ENCODE measurements at regions of chr13 and their contacts with region 1.

Region 1: GRCh38 chr13:41222259-41222852 is 28.0 kb upstream of the KBTBD7 start:
- DNase-seq: peak; percentile 25
- H3K4me3 Mint-ChIP-seq: no peak overlapping the region
- H3K27ac Mint-ChIP-seq: no peak overlapping the region
- H3K4me1 Mint-ChIP-seq: peaks cover 5% of the 10 kb centered on the region
- H3K27me3 Mint-ChIP-seq: no peaks in the 10 kb centered on the region

Region 2: GRCh38 chr13:40922437-40923040 is 299.8 kb before region 1 on chr13:
- intact Hi-C with region 1: no loop called
- DNase-seq: no peak
- H3K4me3 Mint-ChIP-seq: peak overlapping the region; percentile 70
- H3K27ac Mint-ChIP-seq: peak overlapping the region; percentile 68
- H3K4me1 Mint-ChIP-seq: peaks cover 9% of the 10 kb centered on the region
- H3K27me3 Mint-ChIP-seq: no peaks in the 10 kb centered on the region

Region 3: GRCh38 chr13:40943073-40943472 is 279.3 kb before region 1 on chr13:
- intact Hi-C with region 1: no loop called
- DNase-seq: no peak
- H3K4me3 Mint-ChIP-seq: no peak overlapping the region
- H3K27ac Mint-ChIP-seq: no peak overlapping the region
- H3K4me1 Mint-ChIP-seq: peaks cover 8% of the 10 kb centered on the region
- H3K27me3 Mint-ChIP-seq: no peaks in the 10 kb centered on the region

Region 4: GRCh38 chr13:41054212-41054877 is 168.0 kb before region 1 on chr13:
- intact Hi-C with region 1: loop called (anchors 1 kb)
- DNase-seq: no peak
- H3K4me3 Mint-ChIP-seq: no peak overlapping the region
- H3K27ac Mint-ChIP-seq: no peak overlapping the region
- H3K4me1 Mint-ChIP-seq: peaks cover 44% of the 10 kb centered on the region
- H3K27me3 Mint-ChIP-seq: no peaks in the 10 kb centered on the region

Region 5: GRCh38 chr13:41075034-41075433 is 147.3 kb before region 1 on chr13:
- intact Hi-C with region 1: loop called (anchors 1 kb)
- DNase-seq: no peak
- H3K4me3 Mint-ChIP-seq: no peak overlapping the region
- H3K27ac Mint-ChIP-seq: no peak overlapping the region
- H3K4me1 Mint-ChIP-seq: no peaks in the 10 kb centered on the region
- H3K27me3 Mint-ChIP-seq: no peaks in the 10 kb centered on the region

Region 6: DNA sequence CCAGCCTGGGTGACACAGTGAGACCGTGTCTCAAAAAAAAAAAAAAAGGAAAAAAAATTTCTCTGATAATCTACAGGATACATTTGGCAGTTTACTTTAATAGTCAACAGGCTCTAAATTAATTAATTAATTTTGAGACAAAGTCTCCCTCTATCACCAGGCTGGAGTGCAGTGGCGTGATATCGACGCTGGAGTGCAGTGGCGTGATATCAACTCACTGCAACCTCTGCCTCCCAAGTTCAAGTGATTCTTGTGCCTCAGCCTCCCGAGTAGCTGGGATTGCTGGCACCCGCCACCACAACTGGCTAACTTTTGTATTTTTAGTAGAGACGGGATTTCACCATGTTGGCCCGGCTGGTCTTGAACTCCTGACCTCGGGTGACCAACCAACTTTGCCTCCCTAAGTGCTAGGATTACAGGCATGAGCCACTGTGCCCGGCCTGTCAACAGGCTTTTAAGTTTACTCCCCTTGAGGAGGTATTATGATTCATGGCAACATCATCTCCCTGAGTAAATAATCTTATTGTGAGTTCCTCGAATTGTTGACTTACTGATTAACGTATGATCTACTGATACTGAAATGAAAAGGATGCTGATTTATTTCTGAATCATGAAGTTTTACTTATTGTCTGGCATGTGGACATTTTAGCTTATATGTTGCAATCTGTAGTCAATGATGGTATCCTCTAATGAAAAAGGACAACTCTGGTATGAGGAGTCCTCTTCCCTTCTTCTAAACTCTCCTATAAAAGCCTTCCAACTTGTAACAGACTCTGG is 62.3 kb after region 1 on chr13:
- intact Hi-C with region 1: no loop called
- DNase-seq: no peak
- H3K4me3 Mint-ChIP-seq: no peak overlapping the region
- H3K27ac Mint-ChIP-seq: no peak overlapping the region
- H3K4me1 Mint-ChIP-seq: peaks cover 10% of the 10 kb centered on the region
- H3K27me3 Mint-ChIP-seq: no peaks in the 10 kb centered on the region

Measured in activated T-helper 2 cell treated with anti-CD3 and anti-CD28 coated beads, Interferon-gamma antibody, Interleukin-2, Interleukin-4, amounts not matched to agents 10 μg/mL and 5 μg/mL and 100 μg/mL, durations not matched to agents 14 hours and 24 hours and 36 hours (primary cell).